ENCODE measurements at regions of chr1 and their contacts with region 1.

Region 1: GRCh38 chr1:109910123-109910962 is at the start of gene CSF1:
- DNase-seq: peak; percentile 67 to 71
- H3K4me3 ChIP-seq: peak within 1 kb of the TSS; percentile 77 to 96 (median 88)
- H3K27ac ChIP-seq: peak within 1 kb of the TSS; percentile 90 to 96
- H3K4me1 ChIP-seq: peaks cover 4 to 14% of the 10 kb centered on the region in 2 donors
- H3K27me3 ChIP-seq: no peaks in the 10 kb centered on the region
- CTCF ChIP-seq: no peak
- POLR2A ChIP-seq: peak; percentile 16
- total RNA-seq, gene CSF1: 28.2 to 54.7 (median 54.4) TPM

Region 2: DNA sequence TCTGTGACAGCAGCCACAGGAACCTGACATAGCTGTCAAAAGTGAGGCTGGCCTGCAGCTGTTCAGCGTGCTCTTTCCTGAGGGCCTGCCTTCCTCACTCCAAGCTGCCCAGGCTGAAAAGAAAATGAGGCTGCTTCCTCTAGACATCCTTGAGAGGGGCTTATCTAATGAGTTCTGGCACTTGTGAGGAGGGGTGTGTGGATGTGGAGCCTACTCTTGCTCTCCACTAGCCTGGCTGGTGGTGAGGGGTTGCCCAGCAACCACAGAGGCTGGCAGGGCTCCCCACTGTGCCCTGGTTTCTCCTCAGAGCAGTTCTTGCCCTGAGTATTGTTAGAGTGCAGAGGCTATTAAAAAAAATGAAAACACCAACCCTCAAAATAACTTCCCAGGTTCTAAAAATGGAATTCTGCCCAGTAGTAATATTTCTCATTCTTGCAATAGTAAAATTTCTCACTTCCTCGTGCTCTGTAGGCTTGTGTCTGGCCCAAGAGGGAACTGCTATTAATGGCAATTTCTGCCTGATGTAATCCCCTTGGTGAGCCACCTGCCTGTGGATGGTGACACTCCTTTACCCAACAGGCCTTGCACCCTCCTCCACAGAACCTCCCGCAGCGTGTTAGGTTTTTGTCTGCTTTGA is 94.0 kb before region 1 on chr1:
- intact Hi-C with region 1: loop called (anchors 1 kb)
- DNase-seq: peak in 1 of 2 donors; percentile 48
- H3K4me3 ChIP-seq: no peak overlapping the region
- H3K27ac ChIP-seq: peak overlapping the region; percentile 53 to 73
- H3K4me1 ChIP-seq: no peaks in the 10 kb centered on the region
- H3K27me3 ChIP-seq: no peaks in the 10 kb centered on the region
- CTCF ChIP-seq: no peak
- POLR2A ChIP-seq: no peak

Region 3: DNA sequence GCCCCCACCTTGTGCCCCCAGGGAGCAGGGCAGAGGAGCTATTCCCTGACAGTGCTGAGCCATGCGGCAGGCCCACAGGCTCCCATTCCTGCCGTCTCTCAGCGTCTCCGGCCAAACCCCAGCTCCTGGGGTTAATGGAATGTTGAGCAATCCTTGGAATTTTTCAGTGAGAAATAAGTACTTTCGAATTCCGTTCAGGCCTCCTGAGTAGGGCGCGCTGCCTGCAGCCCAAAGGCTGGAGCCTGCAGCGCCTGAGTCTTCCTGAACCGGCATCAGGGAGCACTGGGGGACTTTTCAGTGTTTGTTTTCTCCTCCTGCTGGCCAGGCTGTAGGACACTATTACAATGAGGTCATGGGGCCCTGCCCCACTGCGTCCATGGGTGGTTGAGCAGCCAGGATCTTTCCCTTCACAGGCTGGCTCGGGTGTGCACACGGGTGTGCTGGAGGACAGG is 33.0 kb before region 1 on chr1:
- intact Hi-C with region 1: loop called (anchors 5 kb)
- DNase-seq: peak; percentile 57 to 63
- H3K4me3 ChIP-seq: peak overlapping the region in 2 of 3 donors; percentile 13 to 49
- H3K27ac ChIP-seq: peak overlapping the region; percentile 83 to 97
- H3K4me1 ChIP-seq: peaks cover 7 to 20% of the 10 kb centered on the region in 2 donors
- H3K27me3 ChIP-seq: no peaks in the 10 kb centered on the region
- CTCF ChIP-seq: peak in 2 of 3 donors; percentile 40 to 57
- POLR2A ChIP-seq: no peak

Region 4: GRCh38 chr1:109984456-109985275 is 74.3 kb after region 1 on chr1 and contains the start of gene AHCYL1:
- intact Hi-C with region 1: loop called (anchors 10 kb)
- DNase-seq: peak; percentile 99 to 100
- H3K4me3 ChIP-seq: peak within 1 kb of the TSS; percentile 68 to 88 (median 85)
- H3K27ac ChIP-seq: peak within 1 kb of the TSS; percentile 95 to 97
- H3K4me1 ChIP-seq: peaks cover 0 to 25% of the 10 kb centered on the region in 2 donors
- H3K27me3 ChIP-seq: no peaks in the 10 kb centered on the region
- CTCF ChIP-seq: peak; percentile 97 to 100 (median 99)
- POLR2A ChIP-seq: peak; percentile 98
- total RNA-seq, gene AHCYL1: 67.7 to 75.1 (median 73.8) TPM

Measured in breast epithelium (tissue), 4 donors.